Ovary (tissue), 10 donors: ENCODE measurements at regions of chr3 and their contacts with region 1.

Region 1: DNA sequence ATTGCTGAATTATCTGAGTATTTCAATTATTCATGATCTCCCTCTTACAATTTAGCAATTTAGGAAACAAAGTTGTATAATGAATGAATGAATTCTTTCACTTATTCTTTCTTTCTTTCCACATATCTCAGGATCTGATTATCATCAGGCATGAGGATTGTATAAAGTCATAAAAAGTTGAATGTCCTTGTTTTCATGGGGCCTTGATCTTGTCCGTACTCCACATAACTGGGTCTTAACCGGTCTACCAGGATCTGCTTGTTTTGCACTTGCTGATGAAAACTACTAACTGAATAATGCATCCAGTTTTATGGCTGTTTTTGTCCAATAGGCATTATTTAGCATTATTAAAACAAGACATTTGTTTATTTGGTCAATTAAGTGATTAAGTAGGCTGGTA is 12.6 kb downstream of the C3orf85 start:
- DNase-seq: no peak
- H3K4me3 ChIP-seq: no peak overlapping the region
- H3K27ac ChIP-seq: no peak overlapping the region
- H3K4me1 ChIP-seq: no peaks in the 10 kb centered on the region
- H3K27me3 ChIP-seq: no peaks in the 10 kb centered on the region
- CTCF ChIP-seq: no peak
- EP300 ChIP-seq: no peak
- POLR2A ChIP-seq: no peak

Region 2: DNA sequence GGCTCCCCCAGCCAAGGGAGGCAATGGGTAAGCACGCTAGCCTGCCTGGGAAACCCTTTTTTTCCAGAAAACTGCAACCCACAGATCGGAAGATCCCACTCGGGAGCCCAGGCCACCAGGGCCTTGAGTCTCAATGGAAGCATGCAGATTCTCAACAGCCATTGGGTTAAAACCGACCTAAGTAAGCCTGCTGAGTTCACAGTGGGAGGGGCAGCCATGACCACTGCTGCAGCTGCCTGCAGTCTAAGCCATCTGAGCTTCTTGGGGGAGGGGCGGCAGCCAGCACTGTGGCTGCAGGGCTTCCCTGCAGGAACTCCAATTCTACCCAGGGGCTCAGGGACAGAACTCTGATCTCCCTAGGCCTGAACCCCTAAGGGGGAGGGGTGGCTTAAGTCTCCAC is 85.2 kb after region 1 on chr3:
- intact Hi-C with region 1: no loop called
- DNase-seq: no peak
- H3K4me3 ChIP-seq: no peak overlapping the region
- H3K27ac ChIP-seq: no peak overlapping the region
- H3K4me1 ChIP-seq: no peaks in the 10 kb centered on the region
- H3K27me3 ChIP-seq: no peaks in the 10 kb centered on the region
- CTCF ChIP-seq: no peak
- EP300 ChIP-seq: no peak
- POLR2A ChIP-seq: no peak

Region 3: GRCh38 chr3:109445210-109445609 is 296.1 kb after region 1 on chr3:
- intact Hi-C with region 1: loop called in 1 of 4 experiments (anchors 5 kb)
- DNase-seq: no peak
- H3K4me3 ChIP-seq: no peak overlapping the region
- H3K27ac ChIP-seq: no peak overlapping the region
- H3K4me1 ChIP-seq: no peaks in the 10 kb centered on the region
- H3K27me3 ChIP-seq: no peaks in the 10 kb centered on the region
- CTCF ChIP-seq: no peak
- EP300 ChIP-seq: no peak
- POLR2A ChIP-seq: no peak